H1 (cell line): ENCODE measurements at regions of chr11 and their contacts with region 1.

Region 1: GRCh38 chr11:7548659-7549274 is 35.0 kb downstream of the PPFIBP2 start:
- DNase-seq: peak; percentile 62 to 73
- H3K4me3 ChIP-seq: no peak overlapping the region
- H3K27ac ChIP-seq: no peak overlapping the region
- H3K4me1 ChIP-seq: peaks cover 0 to 7% (median 4%) of the 10 kb centered on the region in 4 experiments; a peak in 4 of 7 replicates
- H3K27me3 ChIP-seq: no peaks in the 10 kb centered on the region
- CTCF ChIP-seq: peak; percentile 94 to 95 (median 94)
- EP300 ChIP-seq: no peak
- POLR2A ChIP-seq: no peak
- RAD21 ChIP-seq: peak; percentile 79 to 83

Region 2: DNA sequence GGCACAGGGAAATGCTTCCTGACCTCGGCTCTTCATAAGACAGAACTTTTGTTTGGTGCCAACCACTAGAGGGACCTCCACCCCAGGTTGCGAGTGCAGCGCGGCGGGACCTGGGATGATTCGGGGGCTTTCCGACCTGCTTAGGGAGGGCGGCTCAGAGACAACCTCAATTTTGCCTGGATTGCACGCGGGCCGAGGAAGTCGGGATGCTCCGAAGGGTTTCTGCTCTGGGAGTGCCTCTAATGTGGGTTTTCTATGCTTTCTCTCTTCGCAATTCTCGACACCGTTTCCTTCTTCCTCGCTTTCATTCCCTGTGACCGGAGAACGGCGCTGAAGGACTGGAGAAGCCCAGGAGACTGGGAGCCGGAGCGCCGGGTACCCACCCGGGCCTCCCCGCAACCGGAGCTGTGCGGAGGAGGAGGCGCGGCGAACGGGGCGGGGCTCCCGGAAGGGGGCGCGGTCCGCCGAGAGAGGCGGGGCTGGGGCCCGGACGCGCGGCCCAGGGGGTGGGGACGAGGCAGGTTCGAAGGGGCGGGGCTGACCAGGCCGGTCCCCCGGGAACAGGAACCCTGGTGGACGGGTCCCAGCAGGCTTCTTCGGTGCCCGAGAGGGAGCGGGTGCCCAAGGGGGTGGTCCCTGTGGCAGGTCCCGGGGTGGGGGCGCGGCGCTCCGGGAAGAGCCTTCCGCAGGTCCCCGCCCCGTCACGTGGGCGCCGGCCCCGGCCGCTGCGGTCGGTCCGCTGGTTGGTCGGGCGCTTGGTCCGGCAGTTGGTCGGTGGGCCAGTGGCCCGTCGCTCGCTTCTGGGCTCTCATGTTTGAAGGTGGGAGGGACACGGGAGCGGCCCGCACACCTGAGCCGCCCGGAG is 35.3 kb before region 1 on chr11 and contains the start of gene PPFIBP2:
- CTCF ChIA-PET with region 1: interaction called, 11 read pairs
- POLR2A ChIA-PET with region 1: no interaction called
- DNase-seq: peak in 1 of 2 experiments; percentile 96
- H3K4me3 ChIP-seq: peak within 1 kb of the TSS; percentile 63 to 77 (median 70)
- H3K27ac ChIP-seq: no peak within 1 kb of the TSS
- H3K4me1 ChIP-seq: peaks cover 0 to 9% (median 5%) of the 10 kb centered on the region in 4 experiments; a peak in 5 of 7 replicates
- H3K27me3 ChIP-seq: peaks cover 0 to 17% (median 9%) of the 10 kb centered on the region in 4 experiments; a peak in 4 of 7 replicates
- CTCF ChIP-seq: peak; percentile 51 to 69 (median 65)
- EP300 ChIP-seq: peak in 1 of 2 experiments; percentile 19; a peak in 1 of 3 replicates
- POLR2A ChIP-seq: 0 out of 3 replicates have a peak, but pooled peaks of 1 of the 2 experiments have one; percentile 52
- RAD21 ChIP-seq: peak; percentile 63 to 73
- total RNA-seq, gene PPFIBP2: 9.8 and 11.7 TPM in 2 replicates

Region 3: DNA sequence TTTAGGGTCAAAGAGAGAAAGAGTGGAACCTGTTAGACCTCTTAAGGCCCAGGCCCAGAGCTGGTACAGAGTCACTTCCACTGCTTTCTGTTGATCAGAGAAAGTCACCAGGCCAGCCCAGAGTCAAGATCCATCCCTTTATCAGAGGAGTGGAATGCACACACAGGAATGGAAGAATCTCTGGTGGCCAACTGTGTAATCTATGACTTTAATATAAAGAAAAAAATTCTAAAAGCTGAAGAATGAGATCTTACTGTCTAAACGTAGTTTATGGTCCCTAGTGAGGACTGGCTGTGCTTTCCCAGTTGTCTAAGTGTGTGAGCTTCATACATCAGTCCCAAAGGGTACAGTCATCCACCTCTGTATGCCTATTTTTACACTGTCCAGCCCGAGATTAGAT is 16.0 kb after region 1 on chr11:
- CTCF ChIA-PET with region 1: interaction called, 54 read pairs
- POLR2A ChIA-PET with region 1: no interaction called
- DNase-seq: no peak
- H3K4me3 ChIP-seq: no peak overlapping the region
- H3K27ac ChIP-seq: no peak overlapping the region
- H3K4me1 ChIP-seq: no peaks in the 10 kb centered on the region; a peak in 1 of 7 replicates
- H3K27me3 ChIP-seq: no peaks in the 10 kb centered on the region
- CTCF ChIP-seq: no peak
- EP300 ChIP-seq: no peak
- POLR2A ChIP-seq: no peak
- RAD21 ChIP-seq: no peak

Region 4: GRCh38 chr11:7651140-7651551 is 102.4 kb after region 1 on chr11:
- CTCF ChIA-PET with region 1: interaction called, 40 read pairs
- POLR2A ChIA-PET with region 1: no interaction called
- DNase-seq: no peak
- H3K4me3 ChIP-seq: no peak overlapping the region
- H3K27ac ChIP-seq: no peak overlapping the region
- H3K4me1 ChIP-seq: no peaks in the 10 kb centered on the region
- H3K27me3 ChIP-seq: peaks cover 0 to 1% (median 0%) of the 10 kb centered on the region in 4 experiments; a peak in 1 of 7 replicates
- CTCF ChIP-seq: no peak
- EP300 ChIP-seq: no peak
- POLR2A ChIP-seq: no peak
- RAD21 ChIP-seq: no peak

Region 5: DNA sequence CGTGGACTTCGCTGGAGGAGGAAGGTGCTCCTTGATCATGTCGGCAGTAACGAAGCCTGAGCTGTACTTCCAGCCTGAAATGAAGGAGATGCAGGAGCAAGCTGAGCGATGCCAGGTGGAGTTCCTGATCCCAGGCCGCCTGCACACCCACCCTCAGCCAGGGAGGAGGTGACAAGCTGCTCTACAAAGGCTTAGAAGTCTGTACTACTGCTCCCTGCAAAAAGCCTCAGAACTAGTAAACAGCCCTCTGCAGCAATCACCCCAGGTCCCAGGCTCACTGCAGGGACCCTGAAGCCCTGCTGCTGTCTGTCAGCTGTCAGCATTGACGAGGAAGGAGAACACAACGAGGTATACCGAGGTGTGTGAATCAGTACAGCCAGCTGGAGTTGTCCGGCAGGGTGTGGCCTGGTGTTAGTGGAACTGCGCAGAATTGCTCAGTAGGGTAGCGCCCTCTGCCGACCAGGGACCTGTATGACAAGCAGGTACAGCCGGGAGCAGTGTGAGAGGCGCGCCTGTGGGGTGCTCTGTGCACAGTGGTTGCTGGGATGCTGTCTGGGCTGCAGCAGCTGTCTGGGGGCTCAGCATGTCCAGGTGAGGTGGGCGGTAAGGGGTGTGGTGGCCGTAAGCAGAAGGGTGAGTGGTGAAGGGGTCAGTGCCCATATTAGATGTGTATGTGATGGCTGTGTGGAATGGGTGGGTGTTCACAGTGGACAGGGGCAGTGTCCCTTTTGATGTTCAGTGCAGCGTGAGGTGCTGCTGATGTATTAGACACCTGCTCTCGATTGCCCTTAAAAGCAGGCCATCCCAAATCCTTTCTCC is 116.9 kb after region 1 on chr11:
- CTCF ChIA-PET with region 1: interaction called, 46 read pairs
- POLR2A ChIA-PET with region 1: no interaction called
- DNase-seq: peak in 1 of 2 experiments; percentile 90
- H3K4me3 ChIP-seq: no peak overlapping the region
- H3K27ac ChIP-seq: no peak overlapping the region
- H3K4me1 ChIP-seq: no peaks in the 10 kb centered on the region
- H3K27me3 ChIP-seq: no peaks in the 10 kb centered on the region
- CTCF ChIP-seq: peak; percentile 80 to 92 (median 87)
- EP300 ChIP-seq: no peak
- POLR2A ChIP-seq: no peak
- RAD21 ChIP-seq: peak; percentile 84 to 88